ENCODE measurements at regions of chr2 and their contacts with region 1.

Region 1: GRCh38 chr2:146506851-146507250 is 1338.0 kb upstream of the ACVR2A start:
- DNase-seq: no peak
- ATAC-seq: no peak
- H3K4me3 ChIP-seq: no peak overlapping the region
- H3K27ac ChIP-seq: no peak overlapping the region
- H3K4me1 ChIP-seq: no peaks in the 10 kb centered on the region
- H3K27me3 ChIP-seq: no peaks in the 10 kb centered on the region
- CTCF ChIP-seq: no peak
- POLR2A ChIP-seq: no peak
- RAD21 ChIP-seq: no peak

Region 2: GRCh38 chr2:146321175-146321574 is 185.7 kb before region 1 on chr2:
- CTCF ChIA-PET with region 1: no interaction called
- POLR2A ChIA-PET with region 1: no interaction called
- dilution Hi-C with region 1: no loop called
- in situ Hi-C with region 1: no loop called
- intact Hi-C with region 1: loop called (anchors 5 kb)
- DNase-seq: peak; percentile 72
- ATAC-seq: peak; percentile 41; the same call in 1 of the 2 replicates
- H3K4me3 ChIP-seq: no peak overlapping the region
- H3K27ac ChIP-seq: no peak overlapping the region
- H3K4me1 ChIP-seq: peaks cover 4% of the 10 kb centered on the region; the same call in 1 of the 2 replicates
- H3K27me3 ChIP-seq: no peaks in the 10 kb centered on the region
- CTCF ChIP-seq: no peak
- POLR2A ChIP-seq: no peak
- RAD21 ChIP-seq: no peak

Region 3: DNA sequence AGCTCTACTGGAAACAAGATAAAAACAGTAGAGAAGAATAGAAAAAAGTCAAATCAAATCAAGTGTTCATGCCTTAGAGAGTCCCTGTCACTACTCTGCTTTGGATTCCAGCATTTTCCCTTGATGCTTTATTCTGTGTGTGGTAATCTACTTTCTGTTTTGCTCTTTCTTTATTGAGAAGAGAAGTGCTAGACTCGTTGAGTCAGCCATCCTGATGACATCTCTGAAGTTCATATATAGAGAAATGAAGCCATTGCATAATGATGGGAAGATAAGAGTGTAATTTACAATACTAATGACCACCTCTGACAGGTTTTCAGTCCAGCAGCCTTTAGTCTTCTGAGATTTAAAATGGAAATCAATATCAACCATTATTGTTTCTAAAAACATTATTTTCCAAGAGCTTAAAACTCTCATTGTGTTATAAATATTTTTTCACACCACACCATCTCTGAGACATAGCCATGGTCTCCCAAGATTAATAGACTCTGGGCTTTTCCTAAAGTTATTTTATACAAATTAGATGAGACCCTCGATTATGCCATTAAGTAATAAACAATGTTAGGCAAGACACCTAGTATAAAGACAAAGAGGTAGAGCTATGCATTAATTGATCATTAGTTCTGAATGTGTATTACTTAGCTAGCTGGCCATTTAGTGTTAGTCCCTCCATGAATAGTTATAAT is 659.0 kb after region 1 on chr2:
- CTCF ChIA-PET with region 1: no interaction called
- POLR2A ChIA-PET with region 1: no interaction called
- dilution Hi-C with region 1: no loop called
- in situ Hi-C with region 1: no loop called
- intact Hi-C with region 1: no loop called
- DNase-seq: no peak
- ATAC-seq: no peak
- H3K4me3 ChIP-seq: no peak overlapping the region
- H3K27ac ChIP-seq: no peak overlapping the region
- H3K4me1 ChIP-seq: no peaks in the 10 kb centered on the region
- H3K27me3 ChIP-seq: no peaks in the 10 kb centered on the region
- CTCF ChIP-seq: no peak
- POLR2A ChIP-seq: no peak
- RAD21 ChIP-seq: no peak

Measured in IMR-90 (cell line).